Activated CD8-positive, alpha-beta T cell treated with anti-CD3 and anti-CD28 coated beads for 36 hours (primary cell): ENCODE measurements at regions of chr9 and their contacts with region 1.

Region 1: GRCh38 chr9:32251539-32251938 is 132.9 kb upstream of the ACO1 start:
- DNase-seq: peak; percentile 49
- ATAC-seq: no peak
- H3K4me3 Mint-ChIP-seq: no peak overlapping the region
- H3K27ac Mint-ChIP-seq: no peak overlapping the region
- H3K4me1 Mint-ChIP-seq: no peaks in the 10 kb centered on the region
- H3K27me3 Mint-ChIP-seq: peaks cover 3% of the 10 kb centered on the region
- CTCF ChIP-seq: peak; percentile 60

Region 2: GRCh38 chr9:32142074-32142473 is 109.5 kb before region 1 on chr9:
- CTCF ChIA-PET with region 1: interaction called, 4 read pairs
- POLR2A ChIA-PET with region 1: no interaction called
- intact Hi-C with region 1: loop called (anchors 10 kb)
- DNase-seq: no peak
- ATAC-seq: no peak
- H3K4me3 Mint-ChIP-seq: no peak overlapping the region
- H3K27ac Mint-ChIP-seq: no peak overlapping the region
- H3K4me1 Mint-ChIP-seq: no peaks in the 10 kb centered on the region
- H3K27me3 Mint-ChIP-seq: no peaks in the 10 kb centered on the region
- CTCF ChIP-seq: no peak